Caco-2 (cell line): ENCODE measurements at regions of chr15 and their contacts with region 1.

Region 1: DNA sequence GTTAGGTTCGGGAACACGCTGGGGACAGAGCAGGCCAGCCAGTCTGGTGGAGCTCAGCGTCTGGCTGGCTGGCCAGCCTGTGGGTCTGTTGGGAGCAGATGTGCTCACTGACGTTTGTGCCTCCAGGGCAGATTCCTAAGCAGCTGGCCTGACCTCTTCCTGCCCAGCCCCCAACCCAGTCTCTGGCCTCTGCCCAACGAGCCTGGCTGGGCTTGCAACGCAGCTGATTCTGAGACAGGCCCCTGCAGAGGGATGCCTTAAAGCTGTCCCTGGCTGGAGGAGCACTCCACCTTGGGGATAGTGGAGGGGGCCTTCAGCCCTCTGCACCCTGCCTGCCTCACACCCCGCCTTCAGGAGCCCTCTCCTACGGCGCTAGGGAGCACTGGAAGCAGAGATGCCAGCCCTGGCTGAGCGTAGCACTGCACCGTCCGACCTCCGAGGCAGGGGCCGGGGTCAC is 46.0 kb downstream of the KLF13 start:
- DNase-seq: peak; percentile 81 to 85
- H3K4me3 ChIP-seq: no peak overlapping the region
- H3K4me3 Mint-ChIP-seq: no peak overlapping the region
- H3K27ac Mint-ChIP-seq: no peak overlapping the region
- H3K4me1 ChIP-seq: peaks cover 30% of the 10 kb centered on the region
- H3K4me1 Mint-ChIP-seq: peaks cover 5% of the 10 kb centered on the region
- H3K27me3 ChIP-seq: no peaks in the 10 kb centered on the region
- H3K27me3 Mint-ChIP-seq: no peaks in the 10 kb centered on the region
- CTCF ChIP-seq: no peak

Region 2: DNA sequence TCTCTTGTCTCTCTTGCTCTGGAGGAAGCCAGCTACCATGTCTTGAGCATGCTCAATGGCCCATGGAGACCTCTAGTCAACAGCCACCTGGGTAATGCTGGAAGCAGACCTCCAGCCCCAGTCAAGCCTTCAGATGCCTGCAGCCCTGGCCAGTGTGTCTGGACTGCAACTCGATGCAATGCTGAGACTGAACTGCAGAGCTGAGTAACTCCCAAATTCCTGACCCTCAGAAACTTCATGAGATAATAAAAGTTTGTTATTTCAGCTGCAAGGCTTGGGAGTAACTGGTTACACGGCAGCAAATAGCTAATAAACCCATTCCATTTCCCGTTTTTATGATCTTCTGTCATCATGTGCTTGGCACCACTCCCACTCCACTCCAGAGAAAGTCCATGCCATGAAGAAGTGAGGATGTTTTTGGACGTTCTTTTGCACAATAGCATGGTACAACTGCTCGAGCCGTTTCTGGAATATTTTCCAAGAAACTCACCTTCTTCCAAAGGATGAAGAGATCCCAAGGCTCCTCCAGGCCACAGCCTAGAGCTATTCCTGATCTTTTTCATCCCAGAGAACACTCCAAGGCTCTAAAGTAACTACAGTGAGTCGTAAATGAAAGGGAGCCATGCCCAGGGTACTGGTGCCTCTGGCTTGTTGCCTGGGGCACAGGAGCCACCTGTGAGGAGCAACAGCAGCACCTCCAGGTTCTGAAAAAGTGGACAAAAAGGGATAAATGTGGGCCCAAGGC is 118.1 kb before region 1 on chr15:
- CTCF ChIA-PET with region 1: no interaction called
- POLR2A ChIA-PET with region 1: no interaction called
- intact Hi-C with region 1: loop called (anchors 10 kb)
- DNase-seq: peak in 1 of 2 experiments; percentile 28
- H3K4me3 ChIP-seq: no peak overlapping the region
- H3K4me3 Mint-ChIP-seq: no peak overlapping the region
- H3K27ac Mint-ChIP-seq: no peak overlapping the region
- H3K4me1 ChIP-seq: no peaks in the 10 kb centered on the region
- H3K4me1 Mint-ChIP-seq: no peaks in the 10 kb centered on the region
- H3K27me3 ChIP-seq: no peaks in the 10 kb centered on the region
- H3K27me3 Mint-ChIP-seq: peaks cover 3% of the 10 kb centered on the region
- CTCF ChIP-seq: peak in 1 of 2 experiments; percentile 28

Region 3: GRCh38 chr15:31338879-31339557 is 33.6 kb before region 1 on chr15:
- CTCF ChIA-PET with region 1: no interaction called
- POLR2A ChIA-PET with region 1: no interaction called
- intact Hi-C with region 1: no loop called
- DNase-seq: no peak
- H3K4me3 ChIP-seq: no peak overlapping the region
- H3K4me3 Mint-ChIP-seq: no peak overlapping the region
- H3K27ac Mint-ChIP-seq: no peak overlapping the region
- H3K4me1 ChIP-seq: peaks cover 2% of the 10 kb centered on the region; the same call in 1 of the 2 replicates
- H3K4me1 Mint-ChIP-seq: no peaks in the 10 kb centered on the region
- H3K27me3 ChIP-seq: no peaks in the 10 kb centered on the region
- H3K27me3 Mint-ChIP-seq: no peaks in the 10 kb centered on the region
- CTCF ChIP-seq: no peak